H1 (cell line): ENCODE measurements at regions of chr13 and their contacts with region 1.

Region 1: DNA sequence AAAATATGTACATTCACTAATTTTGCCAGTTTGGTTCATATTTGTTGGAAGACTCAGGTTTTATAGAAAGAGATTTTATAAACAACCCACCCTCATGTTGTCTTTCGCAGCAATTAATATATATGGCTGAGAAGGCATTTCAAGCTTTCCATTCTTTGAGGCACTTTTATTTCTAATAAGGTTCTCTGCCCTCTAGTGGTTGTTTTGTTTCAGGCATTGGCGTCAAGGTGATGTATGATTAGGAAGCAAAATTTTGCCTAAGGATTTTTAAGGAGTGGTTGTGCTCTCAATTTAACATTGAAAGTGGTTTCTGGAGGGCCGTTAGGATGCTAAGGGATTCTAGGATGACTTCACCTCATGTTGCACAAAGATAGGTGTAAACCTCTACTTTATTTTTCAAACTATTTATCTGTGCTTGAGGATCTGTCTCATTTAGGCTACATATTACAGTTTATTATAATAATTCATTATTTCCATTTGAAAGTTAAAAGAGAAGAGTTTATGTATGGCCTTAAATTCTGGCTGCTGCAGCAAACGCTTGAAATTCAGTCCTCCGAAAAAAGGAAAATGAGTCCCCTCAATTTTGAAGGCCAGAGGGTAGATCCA is 35.9 kb downstream of the OXGR1 start:
- DNase-seq: no peak
- H3K4me3 ChIP-seq: no peak overlapping the region
- H3K27ac ChIP-seq: no peak overlapping the region
- H3K4me1 ChIP-seq: no peaks in the 10 kb centered on the region
- H3K27me3 ChIP-seq: no peaks in the 10 kb centered on the region
- CTCF ChIP-seq: peak in 2 of 3 experiments; percentile 47 to 67; a peak in 2 of 4 replicates
- EP300 ChIP-seq: no peak
- POLR2A ChIP-seq: no peak
- RAD21 ChIP-seq: peak; percentile 67

Region 2: GRCh38 chr13:96785986-96786385 is 172.4 kb before region 1 on chr13:
- CTCF ChIA-PET with region 1: no interaction called
- POLR2A ChIA-PET with region 1: no interaction called
- DNase-seq: no peak
- H3K4me3 ChIP-seq: no peak overlapping the region
- H3K27ac ChIP-seq: no peak overlapping the region
- H3K4me1 ChIP-seq: no peaks in the 10 kb centered on the region
- H3K27me3 ChIP-seq: no peaks in the 10 kb centered on the region
- CTCF ChIP-seq: no peak
- EP300 ChIP-seq: no peak
- POLR2A ChIP-seq: no peak
- RAD21 ChIP-seq: no peak

Region 3: GRCh38 chr13:96822895-96823294 is 135.5 kb before region 1 on chr13:
- CTCF ChIA-PET with region 1: interaction called, 36 read pairs
- POLR2A ChIA-PET with region 1: no interaction called
- DNase-seq: no peak
- H3K4me3 ChIP-seq: no peak overlapping the region
- H3K27ac ChIP-seq: no peak overlapping the region
- H3K4me1 ChIP-seq: no peaks in the 10 kb centered on the region; a peak in 1 of 7 replicates
- H3K27me3 ChIP-seq: no peaks in the 10 kb centered on the region
- CTCF ChIP-seq: peak; percentile 74 to 81 (median 78)
- EP300 ChIP-seq: no peak
- POLR2A ChIP-seq: no peak
- RAD21 ChIP-seq: peak; percentile 78 to 86

Region 4: GRCh38 chr13:96946709-96947311 is 11.6 kb before region 1 on chr13:
- CTCF ChIA-PET with region 1: interaction called, 26 read pairs
- POLR2A ChIA-PET with region 1: no interaction called
- DNase-seq: no peak
- H3K4me3 ChIP-seq: no peak overlapping the region
- H3K27ac ChIP-seq: no peak overlapping the region
- H3K4me1 ChIP-seq: peaks cover 0 to 4% (median 2%) of the 10 kb centered on the region in 4 experiments; a peak in 3 of 7 replicates
- H3K27me3 ChIP-seq: no peaks in the 10 kb centered on the region
- CTCF ChIP-seq: no peak
- EP300 ChIP-seq: no peak
- POLR2A ChIP-seq: no peak
- RAD21 ChIP-seq: no peak